PC-3 (cell line): ENCODE measurements at regions of chr18 and their contacts with region 1.

Region 1: GRCh38 chr18:3186678-3187658 is 32.8 kb downstream of the MYOM1 start:
- DNase-seq: peak; percentile 48
- ATAC-seq: peak; percentile 71
- H3K4me3 ChIP-seq: no peak overlapping the region
- H3K27ac ChIP-seq: no peak overlapping the region
- H3K4me1 ChIP-seq: no peaks in the 10 kb centered on the region
- H3K27me3 ChIP-seq: no peaks in the 10 kb centered on the region
- CTCF ChIP-seq: peak; percentile 52

Region 2: GRCh38 chr18:3074087-3074486 is 112.9 kb before region 1 on chr18:
- CTCF ChIA-PET with region 1: no interaction called
- POLR2A ChIA-PET with region 1: interaction called, 29 read pairs
- intact Hi-C with region 1: no loop called
- DNase-seq: no peak
- ATAC-seq: no peak
- H3K4me3 ChIP-seq: no peak overlapping the region
- H3K27ac ChIP-seq: no peak overlapping the region
- H3K4me1 ChIP-seq: no peaks in the 10 kb centered on the region
- H3K27me3 ChIP-seq: no peaks in the 10 kb centered on the region
- CTCF ChIP-seq: no peak

Region 3: DNA sequence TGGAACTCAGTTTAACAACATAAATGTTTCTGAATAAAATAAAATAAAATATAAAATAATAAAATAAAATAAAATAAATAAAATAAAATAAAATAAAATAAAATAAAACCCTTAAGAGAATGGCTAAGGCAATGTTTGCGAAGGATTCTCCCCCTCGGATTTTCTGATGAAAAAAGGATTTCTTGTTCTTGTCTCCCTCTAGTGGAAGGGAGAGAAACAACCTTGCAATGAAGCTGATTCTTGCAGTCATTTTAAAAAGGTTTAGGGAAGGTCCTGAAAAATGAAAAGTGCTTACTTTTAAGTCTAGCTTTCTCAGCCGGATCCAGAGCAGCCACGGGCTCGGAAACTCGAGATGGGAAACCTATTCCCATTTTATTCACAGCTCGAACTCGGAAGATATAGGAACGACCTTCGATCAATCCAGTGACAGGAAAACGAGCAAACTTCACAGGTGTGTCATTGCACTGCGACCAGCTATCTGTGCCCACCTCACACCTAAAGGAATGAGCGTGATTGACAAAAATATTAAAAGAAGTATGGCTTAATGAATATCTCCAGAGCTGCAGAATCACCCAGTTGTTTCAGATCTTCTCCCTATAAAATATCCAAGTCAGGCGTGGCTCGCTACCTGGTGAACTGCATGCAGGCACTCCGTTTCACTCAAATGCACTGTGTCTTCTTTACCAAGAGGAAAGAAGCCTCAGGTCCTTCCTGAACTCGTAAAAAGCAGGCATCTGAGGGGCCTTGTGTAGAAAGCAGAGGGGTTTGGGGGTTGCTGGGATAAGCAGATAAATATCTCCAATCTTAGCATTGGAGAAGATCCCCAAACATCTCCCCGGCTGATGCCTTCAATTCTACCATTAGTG is 35.3 kb before region 1 on chr18:
- CTCF ChIA-PET with region 1: interaction called, 11 read pairs
- POLR2A ChIA-PET with region 1: no interaction called
- intact Hi-C with region 1: no loop called
- DNase-seq: peak; percentile 59
- ATAC-seq: no peak
- H3K4me3 ChIP-seq: peak overlapping the region; percentile 50; the same call in 1 of the 2 replicates
- H3K27ac ChIP-seq: no peak overlapping the region
- H3K4me1 ChIP-seq: no peaks in the 10 kb centered on the region
- H3K27me3 ChIP-seq: no peaks in the 10 kb centered on the region
- CTCF ChIP-seq: peak; percentile 74

Region 4: DNA sequence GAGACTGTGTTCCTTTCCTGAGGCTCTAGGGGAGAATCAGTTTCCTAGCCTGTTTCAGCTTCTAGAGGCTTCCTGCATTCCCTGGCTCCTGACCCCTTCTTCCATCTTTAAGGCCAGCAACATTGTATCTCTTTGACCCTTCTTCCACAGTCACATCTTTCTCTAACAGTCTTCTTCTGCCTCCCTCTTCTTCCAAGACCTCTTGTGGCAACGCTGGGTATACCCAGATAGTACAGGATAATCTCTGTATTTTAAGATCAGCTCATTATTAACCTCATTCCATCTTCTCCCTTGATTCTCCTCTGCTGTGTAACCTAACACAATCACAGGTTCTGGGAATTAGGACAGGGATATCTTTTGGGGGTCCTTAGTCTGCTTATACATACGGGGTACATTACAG is 51.8 kb after region 1 on chr18:
- CTCF ChIA-PET with region 1: interaction called, 6 read pairs
- POLR2A ChIA-PET with region 1: no interaction called
- intact Hi-C with region 1: loop called (anchors 2 kb)
- DNase-seq: peak; percentile 25
- ATAC-seq: peak; percentile 65
- H3K4me3 ChIP-seq: no peak overlapping the region
- H3K27ac ChIP-seq: no peak overlapping the region
- H3K4me1 ChIP-seq: peaks cover 13% of the 10 kb centered on the region
- H3K27me3 ChIP-seq: no peaks in the 10 kb centered on the region
- CTCF ChIP-seq: peak; percentile 51; the same call in 1 of the 2 replicates

Region 5: GRCh38 chr18:3297025-3297984 is 110.3 kb after region 1 on chr18:
- CTCF ChIA-PET with region 1: no interaction called
- POLR2A ChIA-PET with region 1: no interaction called
- intact Hi-C with region 1: no loop called
- DNase-seq: peak; percentile 99
- ATAC-seq: peak; percentile 94
- H3K4me3 ChIP-seq: peak overlapping the region; percentile 84
- H3K27ac ChIP-seq: peak overlapping the region; percentile 76
- H3K4me1 ChIP-seq: peaks cover 6% of the 10 kb centered on the region; the same call in 1 of the 2 replicates
- H3K27me3 ChIP-seq: no peaks in the 10 kb centered on the region
- CTCF ChIP-seq: peak; percentile 94

Region 6: DNA sequence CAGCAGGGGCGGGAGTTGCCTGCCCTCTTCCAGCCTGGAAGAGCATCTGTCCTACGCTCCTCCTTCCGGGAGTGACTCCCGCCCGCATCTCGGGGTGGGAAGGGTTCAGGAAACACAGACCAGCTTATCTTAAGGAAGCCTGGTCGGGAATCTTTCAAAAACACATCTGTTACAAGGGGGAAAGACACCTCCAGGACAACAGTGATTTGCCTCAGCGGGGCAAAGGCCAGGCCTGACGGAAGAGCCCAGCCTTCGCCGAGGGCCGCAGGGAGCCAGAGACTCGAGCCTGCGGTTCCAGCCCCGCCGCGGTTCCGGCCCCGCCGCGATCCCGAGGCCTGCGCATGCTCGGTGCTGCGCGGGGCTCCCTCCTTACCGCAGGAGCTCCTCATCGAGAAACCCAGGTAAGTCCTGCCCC is 224.9 kb after region 1 on chr18:
- CTCF ChIA-PET with region 1: no interaction called
- POLR2A ChIA-PET with region 1: no interaction called
- intact Hi-C with region 1: no loop called
- DNase-seq: no peak
- ATAC-seq: no peak
- H3K4me3 ChIP-seq: no peak overlapping the region
- H3K27ac ChIP-seq: peak overlapping the region; percentile 70
- H3K4me1 ChIP-seq: peaks cover 34% of the 10 kb centered on the region
- H3K27me3 ChIP-seq: no peaks in the 10 kb centered on the region
- CTCF ChIP-seq: no peak